Activated CD4-positive, alpha-beta T cell treated with anti-CD3 and anti-CD28 coated beads for 36 hours (primary cell): ENCODE measurements at regions of chr15 and their contacts with region 1.

Region 1: GRCh38 chr15:52256366-52256765 is 39.2 kb downstream of the MYO5C start:
- DNase-seq: peak; percentile 88
- ATAC-seq: peak; percentile 48
- H3K4me3 Mint-ChIP-seq: peak overlapping the region; percentile 53
- H3K27ac Mint-ChIP-seq: peak overlapping the region; percentile 70
- H3K4me1 Mint-ChIP-seq: peaks cover 31% of the 10 kb centered on the region
- H3K27me3 Mint-ChIP-seq: no peaks in the 10 kb centered on the region

Region 2: DNA sequence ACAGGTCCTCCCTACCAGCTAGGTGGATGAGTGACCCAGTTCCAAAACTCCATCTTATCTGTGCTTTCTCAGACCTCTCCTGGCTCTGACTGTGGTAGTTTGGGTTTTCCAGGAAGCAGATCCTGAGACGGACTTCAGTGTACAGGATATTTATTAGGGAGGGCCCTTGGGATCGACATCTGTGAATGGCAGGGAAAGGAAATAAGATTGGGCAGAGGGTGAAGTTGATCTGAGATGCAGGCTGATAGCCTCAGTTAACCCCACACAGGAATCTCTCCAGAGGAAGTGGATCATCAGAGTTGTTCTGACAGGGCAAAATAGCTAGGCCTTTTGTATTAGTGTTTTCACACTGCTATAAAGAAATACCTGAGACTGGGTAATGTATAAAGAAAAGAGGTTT is 254.0 kb before region 1 on chr15:
- CTCF ChIA-PET with region 1: no interaction called
- POLR2A ChIA-PET with region 1: no interaction called
- intact Hi-C with region 1: no loop called
- DNase-seq: no peak
- ATAC-seq: no peak
- H3K4me3 Mint-ChIP-seq: no peak overlapping the region
- H3K27ac Mint-ChIP-seq: no peak overlapping the region
- H3K4me1 Mint-ChIP-seq: peaks cover 38% of the 10 kb centered on the region
- H3K27me3 Mint-ChIP-seq: no peaks in the 10 kb centered on the region

Region 3: GRCh38 chr15:52171386-52171785 is 85.0 kb before region 1 on chr15:
- CTCF ChIA-PET with region 1: no interaction called
- POLR2A ChIA-PET with region 1: no interaction called
- intact Hi-C with region 1: no loop called
- DNase-seq: peak; percentile 39
- ATAC-seq: peak; percentile 78
- H3K4me3 Mint-ChIP-seq: no peak overlapping the region
- H3K27ac Mint-ChIP-seq: no peak overlapping the region
- H3K4me1 Mint-ChIP-seq: peaks cover 15% of the 10 kb centered on the region
- H3K27me3 Mint-ChIP-seq: no peaks in the 10 kb centered on the region

Region 4: GRCh38 chr15:52280326-52281084 is 24.1 kb after region 1 on chr15:
- CTCF ChIA-PET with region 1: interaction called, 13 read pairs
- POLR2A ChIA-PET with region 1: interaction called, 3 read pairs
- intact Hi-C with region 1: no loop called
- DNase-seq: no peak
- ATAC-seq: no peak
- H3K4me3 Mint-ChIP-seq: no peak overlapping the region
- H3K27ac Mint-ChIP-seq: no peak overlapping the region
- H3K4me1 Mint-ChIP-seq: no peaks in the 10 kb centered on the region
- H3K27me3 Mint-ChIP-seq: no peaks in the 10 kb centered on the region

Region 5: GRCh38 chr15:52466134-52466701 is 209.9 kb after region 1 on chr15:
- CTCF ChIA-PET with region 1: interaction called, 4 read pairs
- POLR2A ChIA-PET with region 1: interaction called, 4 read pairs
- intact Hi-C with region 1: loop called (anchors 5 to 10 kb)
- DNase-seq: peak; percentile 71
- ATAC-seq: peak; percentile 80
- H3K4me3 Mint-ChIP-seq: no peak overlapping the region
- H3K27ac Mint-ChIP-seq: peak overlapping the region; percentile 20
- H3K4me1 Mint-ChIP-seq: peaks cover 43% of the 10 kb centered on the region
- H3K27me3 Mint-ChIP-seq: no peaks in the 10 kb centered on the region

Region 6: DNA sequence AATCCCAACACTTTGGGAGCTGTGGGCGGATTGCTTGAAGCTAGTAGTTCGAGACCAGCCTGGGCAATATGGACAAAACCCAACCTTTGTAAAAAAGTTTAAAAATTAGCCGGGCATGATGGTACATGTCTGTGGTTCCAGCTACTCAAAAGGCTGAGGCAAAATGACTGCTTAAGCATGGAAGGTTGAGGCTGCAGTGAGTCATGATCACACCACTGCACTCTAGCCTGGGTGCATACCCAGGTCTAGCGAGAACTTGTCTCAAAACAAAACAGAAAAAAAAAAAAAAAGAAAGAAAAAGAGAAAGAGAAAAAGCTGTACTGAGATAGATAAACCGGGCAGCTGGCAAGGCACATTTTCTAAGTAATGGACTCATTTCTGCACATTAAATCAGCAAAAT is 301.8 kb after region 1 on chr15:
- CTCF ChIA-PET with region 1: interaction called, 4 read pairs
- POLR2A ChIA-PET with region 1: no interaction called
- intact Hi-C with region 1: loop called (anchors 2 to 5 kb)
- DNase-seq: peak; percentile 83
- ATAC-seq: peak; percentile 82
- H3K4me3 Mint-ChIP-seq: peak overlapping the region; percentile 63
- H3K27ac Mint-ChIP-seq: peak overlapping the region; percentile 96
- H3K4me1 Mint-ChIP-seq: peaks cover 66% of the 10 kb centered on the region
- H3K27me3 Mint-ChIP-seq: no peaks in the 10 kb centered on the region

Region 7: GRCh38 chr15:52679232-52680040 is 423.1 kb after region 1 on chr15 and contains the start of gene ATOSA:
- CTCF ChIA-PET with region 1: interaction called, 5 read pairs
- POLR2A ChIA-PET with region 1: no interaction called
- intact Hi-C with region 1: loop called (anchors 2 kb)
- DNase-seq: peak; percentile 95
- ATAC-seq: peak; percentile 85
- H3K4me3 Mint-ChIP-seq: peak within 1 kb of the TSS; percentile 99
- H3K27ac Mint-ChIP-seq: peak within 1 kb of the TSS; percentile 97
- H3K4me1 Mint-ChIP-seq: peaks cover 45% of the 10 kb centered on the region
- H3K27me3 Mint-ChIP-seq: no peaks in the 10 kb centered on the region
- total RNA-seq, gene ATOSA: 13.4 to 13.5 TPM

Region 8: GRCh38 chr15:53059273-53060043 is 803.1 kb after region 1 on chr15:
- CTCF ChIA-PET with region 1: no interaction called
- POLR2A ChIA-PET with region 1: no interaction called
- intact Hi-C with region 1: no loop called
- DNase-seq: no peak
- ATAC-seq: no peak
- H3K4me3 Mint-ChIP-seq: no peak overlapping the region
- H3K27ac Mint-ChIP-seq: no peak overlapping the region
- H3K4me1 Mint-ChIP-seq: no peaks in the 10 kb centered on the region
- H3K27me3 Mint-ChIP-seq: no peaks in the 10 kb centered on the region